Mammary epithelial cell (primary cell): ENCODE measurements at regions of chr3 and their contacts with region 1.

Region 1: GRCh38 chr3:55597638-55598037 is 110.5 kb upstream of the WNT5A start:
- DNase-seq: no peak
- H3K4me3 ChIP-seq: no peak overlapping the region
- H3K27ac ChIP-seq: no peak overlapping the region
- H3K4me1 ChIP-seq: no peaks in the 10 kb centered on the region
- H3K27me3 ChIP-seq: no peaks in the 10 kb centered on the region
- CTCF ChIP-seq: no peak

Region 2: DNA sequence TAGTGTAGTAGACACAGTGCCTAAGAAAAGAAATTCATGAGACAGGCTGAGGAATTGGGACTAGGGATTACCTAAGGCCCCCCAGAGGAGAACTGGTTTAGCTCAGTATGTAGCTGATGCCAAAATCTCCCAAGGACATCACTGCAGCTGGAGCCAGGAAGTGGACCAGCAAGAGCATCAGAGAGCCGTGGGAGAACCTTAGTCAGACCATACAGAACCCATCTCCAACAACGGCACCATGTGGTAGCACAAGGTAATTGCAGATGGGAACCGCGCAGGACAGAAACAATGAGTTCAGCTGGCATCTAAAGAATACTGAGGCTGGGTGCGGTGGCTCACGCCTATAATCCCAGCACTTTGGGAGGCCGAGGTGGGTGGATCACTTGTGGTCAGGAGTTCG is 192.2 kb before region 1 on chr3:
- CTCF ChIA-PET with region 1: no interaction called
- dilution Hi-C with region 1: no loop called
- in situ Hi-C with region 1: no loop called
- intact Hi-C with region 1: no loop called
- DNase-seq: peak; percentile 17
- H3K4me3 ChIP-seq: no peak overlapping the region
- H3K27ac ChIP-seq: no peak overlapping the region
- H3K4me1 ChIP-seq: peaks cover 15% of the 10 kb centered on the region
- H3K27me3 ChIP-seq: no peaks in the 10 kb centered on the region
- CTCF ChIP-seq: peak; percentile 38 to 49

Region 3: DNA sequence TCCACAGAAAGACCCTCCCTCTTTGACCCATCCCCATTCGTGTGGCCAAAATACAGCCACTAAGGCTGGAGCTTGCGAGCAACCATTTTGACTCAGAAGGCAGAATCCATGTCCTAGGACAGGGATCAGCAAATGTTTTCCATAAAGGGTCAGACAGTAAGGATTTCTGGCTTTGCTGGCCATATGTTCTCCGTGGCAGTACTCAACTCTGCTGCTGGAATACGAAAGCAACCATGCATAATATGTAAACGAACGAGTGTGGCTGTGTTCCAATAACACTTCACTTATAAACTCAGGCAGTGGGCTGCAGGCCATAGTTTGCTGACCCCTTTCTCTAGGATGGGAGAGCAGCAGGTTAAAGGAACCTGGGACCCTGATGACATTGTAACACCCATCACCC is 32.9 kb before region 1 on chr3:
- CTCF ChIA-PET with region 1: no interaction called
- dilution Hi-C with region 1: loop called (anchors 5 kb)
- in situ Hi-C with region 1: no loop called
- intact Hi-C with region 1: no loop called
- DNase-seq: no peak
- H3K4me3 ChIP-seq: no peak overlapping the region
- H3K27ac ChIP-seq: no peak overlapping the region
- H3K4me1 ChIP-seq: no peaks in the 10 kb centered on the region
- H3K27me3 ChIP-seq: no peaks in the 10 kb centered on the region
- CTCF ChIP-seq: no peak

Region 4: GRCh38 chr3:55576621-55577388 is 20.8 kb before region 1 on chr3:
- CTCF ChIA-PET with region 1: no interaction called
- dilution Hi-C with region 1: no loop called
- in situ Hi-C with region 1: no loop called
- intact Hi-C with region 1: no loop called
- DNase-seq: no peak
- H3K4me3 ChIP-seq: no peak overlapping the region
- H3K27ac ChIP-seq: no peak overlapping the region
- H3K4me1 ChIP-seq: no peaks in the 10 kb centered on the region
- H3K27me3 ChIP-seq: no peaks in the 10 kb centered on the region
- CTCF ChIP-seq: no peak